ENCODE measurements at regions of chr10 and their contacts with region 1.

Region 1: GRCh38 chr10:19974138-19974537 is 157.9 kb downstream of the PLXDC2 start:
- DNase-seq: no peak
- H3K4me3 Mint-ChIP-seq: no peak overlapping the region
- H3K27ac Mint-ChIP-seq: no peak overlapping the region
- H3K4me1 Mint-ChIP-seq: no peaks in the 10 kb centered on the region
- H3K27me3 Mint-ChIP-seq: no peaks in the 10 kb centered on the region
- CTCF ChIP-seq: no peak

Region 2: GRCh38 chr10:19688366-19688765 is 285.8 kb before region 1 on chr10:
- CTCF ChIA-PET with region 1: no interaction called
- intact Hi-C with region 1: no loop called
- DNase-seq: no peak
- H3K4me3 Mint-ChIP-seq: no peak overlapping the region
- H3K27ac Mint-ChIP-seq: no peak overlapping the region
- H3K4me1 Mint-ChIP-seq: no peaks in the 10 kb centered on the region
- H3K27me3 Mint-ChIP-seq: no peaks in the 10 kb centered on the region
- CTCF ChIP-seq: no peak

Region 3: GRCh38 chr10:20768843-20769242 is 794.7 kb after region 1 on chr10:
- CTCF ChIA-PET with region 1: no interaction called
- intact Hi-C with region 1: loop called (anchors 10 kb)
- DNase-seq: no peak
- H3K4me3 Mint-ChIP-seq: no peak overlapping the region
- H3K27ac Mint-ChIP-seq: no peak overlapping the region
- H3K4me1 Mint-ChIP-seq: no peaks in the 10 kb centered on the region
- H3K27me3 Mint-ChIP-seq: peaks cover 18% of the 10 kb centered on the region
- CTCF ChIP-seq: no peak

Measured in Calu3 (cell line).